ENCODE measurements at regions of chr17 and their contacts with region 1.

Region 1: DNA sequence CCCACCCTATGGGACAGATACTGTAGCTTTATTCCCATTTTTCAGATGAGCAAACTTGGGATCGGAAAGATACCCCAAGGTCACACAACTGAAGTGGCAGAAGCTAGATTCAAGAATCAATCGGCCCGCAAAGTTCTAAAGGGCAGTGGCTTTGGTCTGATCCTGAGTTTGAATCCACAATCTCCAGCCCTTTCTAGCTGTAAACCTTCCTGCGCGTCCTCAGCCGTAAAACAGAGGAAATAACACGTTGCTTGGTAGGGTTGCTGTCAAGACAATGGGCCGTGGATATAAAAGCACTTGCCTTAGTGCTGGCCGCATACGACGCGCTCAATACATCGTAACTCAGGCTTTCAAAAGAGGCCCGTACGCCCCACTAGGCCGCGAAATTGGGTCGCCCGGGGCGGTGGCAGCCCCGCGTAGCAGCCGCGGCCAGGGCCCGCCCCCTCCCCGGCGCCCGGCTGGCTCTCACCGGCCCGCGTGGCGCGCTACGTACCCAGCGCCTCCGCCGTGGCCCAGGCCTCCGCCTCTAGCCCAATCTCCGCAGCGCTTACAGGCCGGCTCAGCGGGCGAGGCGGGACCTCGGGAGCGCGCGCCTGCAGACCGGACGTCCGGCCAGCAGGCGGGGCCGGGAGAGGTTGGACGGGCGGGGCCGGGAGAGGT is at the start of gene DCAKD:
- DNase-seq: peak; percentile 88 to 95
- H3K4me3 ChIP-seq: peak within 1 kb of the TSS; percentile 98
- H3K27ac ChIP-seq: peak within 1 kb of the TSS; percentile 92
- H3K4me1 ChIP-seq: peaks cover 26% of the 10 kb centered on the region
- H3K27me3 ChIP-seq: no peaks in the 10 kb centered on the region
- CTCF ChIP-seq: no peak
- total RNA-seq, gene DCAKD: 57.9 and 68.8 TPM in 2 replicates

Region 2: GRCh38 chr17:44733753-44734152 is 317.4 kb before region 1 on chr17:
- CTCF ChIA-PET with region 1: interaction called, 10 read pairs
- POLR2A ChIA-PET with region 1: no interaction called
- intact Hi-C with region 1: no loop called
- DNase-seq: no peak
- H3K4me3 ChIP-seq: no peak overlapping the region
- H3K27ac ChIP-seq: no peak overlapping the region
- H3K4me1 ChIP-seq: no peaks in the 10 kb centered on the region
- H3K27me3 ChIP-seq: no peaks in the 10 kb centered on the region
- CTCF ChIP-seq: peak; percentile 42; the same call in 1 of the 2 replicates

Region 3: DNA sequence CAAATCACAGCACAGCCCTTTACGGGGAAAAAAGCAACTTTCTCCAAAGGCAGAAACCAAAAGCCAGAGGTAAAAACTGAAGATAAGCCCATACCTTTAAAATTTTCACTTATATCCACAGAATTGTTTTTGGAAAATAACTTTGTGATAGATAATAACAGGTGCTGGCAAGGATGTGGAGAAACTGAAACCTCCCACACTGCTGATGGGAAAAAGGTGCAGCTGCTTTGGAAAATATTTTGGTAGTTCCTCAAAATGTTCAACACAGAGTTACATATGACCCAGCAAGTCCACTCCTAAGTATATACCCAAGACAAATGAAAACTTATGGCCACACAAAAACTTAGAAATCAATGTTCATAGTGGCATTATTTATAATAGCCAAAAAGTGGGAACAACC is 164.2 kb before region 1 on chr17:
- CTCF ChIA-PET with region 1: no interaction called
- POLR2A ChIA-PET with region 1: no interaction called
- intact Hi-C with region 1: no loop called
- DNase-seq: no peak
- H3K4me3 ChIP-seq: no peak overlapping the region
- H3K27ac ChIP-seq: no peak overlapping the region
- H3K4me1 ChIP-seq: no peaks in the 10 kb centered on the region
- H3K27me3 ChIP-seq: no peaks in the 10 kb centered on the region
- CTCF ChIP-seq: no peak

Region 4: DNA sequence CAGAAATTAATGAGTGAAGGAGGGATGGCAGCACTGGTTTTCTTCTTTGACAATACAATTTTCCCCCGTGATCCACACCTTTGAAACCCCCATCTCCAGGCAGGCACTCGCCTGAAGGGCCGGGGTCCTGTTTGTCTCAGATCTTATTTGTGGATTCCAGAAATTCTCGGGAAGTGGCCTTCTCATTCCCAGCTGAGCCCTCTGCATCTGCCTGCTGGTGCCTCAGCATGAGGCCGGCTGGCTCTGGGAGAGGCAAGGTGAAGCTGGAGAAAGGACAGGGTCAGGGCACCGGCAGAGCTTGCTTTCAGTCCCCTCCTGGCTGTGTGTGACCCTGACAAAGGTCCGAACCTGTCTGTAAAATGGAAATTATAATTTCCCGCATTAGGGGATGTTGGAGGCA is 47.3 kb before region 1 on chr17:
- CTCF ChIA-PET with region 1: no interaction called
- POLR2A ChIA-PET with region 1: interaction called, 22 read pairs
- intact Hi-C with region 1: no loop called
- DNase-seq: no peak
- H3K4me3 ChIP-seq: no peak overlapping the region
- H3K27ac ChIP-seq: no peak overlapping the region
- H3K4me1 ChIP-seq: no peaks in the 10 kb centered on the region
- H3K27me3 ChIP-seq: peaks cover 12% of the 10 kb centered on the region; the same call in 1 of the 2 replicates
- CTCF ChIP-seq: no peak

Region 5: DNA sequence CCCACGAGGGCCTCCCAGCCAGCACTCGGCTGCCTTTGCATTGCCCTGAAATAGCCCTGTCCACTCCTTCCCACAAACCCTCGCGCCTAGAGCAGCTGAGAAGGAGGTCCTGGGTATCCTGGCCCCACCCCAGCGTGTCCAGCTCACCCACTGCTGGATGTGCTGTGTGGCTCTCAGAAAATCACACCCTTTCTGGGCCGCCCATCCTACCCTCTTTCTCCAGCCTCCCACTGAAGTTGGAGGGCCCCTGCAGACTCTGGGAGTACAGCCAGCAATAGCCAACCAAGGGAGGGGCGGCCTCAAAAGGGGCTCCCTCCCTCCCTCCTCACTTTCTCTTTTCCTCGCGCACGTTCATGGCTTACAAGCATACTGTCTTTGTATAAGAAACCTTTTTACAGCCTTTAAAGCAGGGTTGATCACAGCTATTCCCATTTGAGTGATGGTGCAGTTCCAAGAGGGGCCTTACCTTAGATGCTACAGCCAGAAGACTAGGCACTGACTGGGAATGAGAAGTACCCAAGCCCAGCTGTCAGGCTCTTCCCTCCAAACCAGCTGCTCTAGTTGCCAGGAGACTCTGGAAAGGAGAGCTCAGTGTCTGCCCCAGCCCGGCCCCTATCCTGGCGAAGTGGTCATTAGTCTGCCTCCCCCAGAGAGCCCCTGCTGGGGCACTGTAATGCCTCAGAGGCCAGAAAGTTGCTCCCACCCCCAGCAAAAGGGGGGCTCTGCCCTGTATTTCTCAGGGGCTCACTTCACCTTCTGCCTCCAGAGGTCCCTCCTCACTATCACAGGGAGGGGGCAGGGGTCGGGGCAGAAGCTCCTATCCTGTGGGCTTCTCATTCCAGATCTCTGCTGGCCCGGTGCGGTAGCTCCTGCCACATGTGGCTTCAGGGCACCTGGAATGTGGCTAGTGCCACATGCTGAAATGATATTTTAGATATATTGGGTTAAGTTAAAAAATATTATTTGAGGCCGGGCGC is 37.9 kb before region 1 on chr17:
- CTCF ChIA-PET with region 1: no interaction called
- POLR2A ChIA-PET with region 1: interaction called, 17 read pairs
- intact Hi-C with region 1: no loop called
- DNase-seq: no peak
- H3K4me3 ChIP-seq: no peak overlapping the region
- H3K27ac ChIP-seq: no peak overlapping the region
- H3K4me1 ChIP-seq: no peaks in the 10 kb centered on the region; the same call in 1 of the 2 replicates
- H3K27me3 ChIP-seq: 0 out of 2 replicates have a peak, but pooled peaks cover under 1% of the 10 kb centered on the region
- CTCF ChIP-seq: no peak

Region 6: DNA sequence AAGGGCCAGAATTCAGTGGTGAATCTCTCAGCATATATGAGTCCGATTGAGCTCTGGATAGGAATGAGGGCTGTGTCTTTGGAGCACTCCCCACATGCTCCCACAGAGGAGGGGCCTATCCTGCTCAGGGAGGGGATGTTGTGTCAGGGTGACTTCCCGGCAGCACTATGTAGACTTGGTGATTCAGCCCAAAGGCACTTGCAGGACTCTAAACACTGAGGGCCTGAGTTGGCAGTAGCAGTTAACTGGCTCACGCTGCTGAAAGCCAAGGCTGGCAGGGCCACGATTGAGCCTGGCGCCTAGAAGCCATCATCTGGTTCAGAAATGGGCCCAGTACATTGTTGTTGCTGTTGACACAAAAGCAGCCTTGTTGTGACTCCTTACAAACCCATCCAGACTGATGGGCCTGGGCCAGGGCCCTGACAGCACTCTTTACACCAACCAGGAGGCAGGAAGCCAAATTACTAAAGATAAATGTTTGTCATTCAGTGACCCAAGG is 41.8 kb after region 1 on chr17:
- CTCF ChIA-PET with region 1: no interaction called
- POLR2A ChIA-PET with region 1: no interaction called
- intact Hi-C with region 1: loop called (anchors 5 kb)
- DNase-seq: peak; percentile 86 to 88
- H3K4me3 ChIP-seq: no peak overlapping the region
- H3K27ac ChIP-seq: peak overlapping the region; percentile 66
- H3K4me1 ChIP-seq: peaks cover 21% of the 10 kb centered on the region
- H3K27me3 ChIP-seq: no peaks in the 10 kb centered on the region
- CTCF ChIP-seq: no peak

Region 7: DNA sequence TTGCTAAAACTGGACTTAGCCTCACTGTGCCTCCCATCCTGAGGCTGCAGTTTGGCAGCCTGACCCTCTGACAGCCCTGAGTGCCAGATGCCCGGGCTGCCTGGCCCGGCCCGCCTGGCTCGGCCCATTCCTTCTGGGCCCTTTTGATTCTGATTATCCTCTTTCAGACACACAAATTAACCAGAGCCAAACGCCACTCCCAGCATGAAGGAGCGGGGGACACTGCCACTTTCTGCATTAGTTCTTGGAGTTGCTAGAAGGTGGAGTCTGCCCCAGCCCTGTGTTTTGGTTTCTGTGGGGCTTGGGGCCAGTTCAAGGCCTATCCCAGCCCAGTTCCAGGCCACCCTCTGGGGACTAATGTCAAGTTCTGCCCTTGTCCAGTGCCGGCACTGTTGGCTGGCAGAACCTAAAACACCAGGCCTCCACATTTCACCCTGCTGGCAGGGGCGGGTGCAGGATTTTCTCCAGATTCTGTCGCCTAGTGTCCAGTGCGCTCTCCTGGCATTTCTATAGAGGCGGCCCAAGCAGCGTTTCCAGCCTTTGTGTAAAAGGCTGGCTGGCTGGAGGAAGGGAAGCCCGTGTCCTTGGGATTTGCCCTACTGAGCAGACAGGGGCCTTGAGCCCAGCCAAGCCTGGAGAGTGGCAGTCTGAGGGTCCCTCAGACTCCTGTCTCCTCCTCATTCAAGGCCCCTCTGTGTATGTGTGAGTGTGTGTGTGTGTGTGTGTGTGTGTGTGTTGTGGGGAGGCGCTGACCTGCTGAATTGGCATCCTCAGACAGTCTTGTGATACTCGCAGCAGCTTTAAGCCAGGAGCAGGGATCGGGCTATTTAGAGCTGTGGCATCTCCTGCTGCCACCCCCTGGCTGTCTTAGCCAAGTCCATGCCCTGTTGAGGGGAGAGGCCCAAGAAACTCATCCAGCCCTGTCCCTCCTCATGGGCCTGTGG is 59.8 kb after region 1 on chr17:
- CTCF ChIA-PET with region 1: no interaction called
- POLR2A ChIA-PET with region 1: no interaction called
- intact Hi-C with region 1: no loop called
- DNase-seq: no peak
- H3K4me3 ChIP-seq: no peak overlapping the region
- H3K27ac ChIP-seq: no peak overlapping the region
- H3K4me1 ChIP-seq: no peaks in the 10 kb centered on the region
- H3K27me3 ChIP-seq: no peaks in the 10 kb centered on the region
- CTCF ChIP-seq: no peak

Region 8: GRCh38 chr17:45235416-45236281 is 184.5 kb after region 1 on chr17:
- CTCF ChIA-PET with region 1: no interaction called
- POLR2A ChIA-PET with region 1: no interaction called
- intact Hi-C with region 1: no loop called
- DNase-seq: peak in 1 of 2 experiments; percentile 60
- H3K4me3 ChIP-seq: no peak overlapping the region
- H3K27ac ChIP-seq: no peak overlapping the region
- H3K4me1 ChIP-seq: peaks cover 12% of the 10 kb centered on the region
- H3K27me3 ChIP-seq: no peaks in the 10 kb centered on the region
- CTCF ChIP-seq: peak; percentile 92